Caco-2 (cell line): ENCODE measurements at regions of chr17 and their contacts with region 1.

Region 1: DNA sequence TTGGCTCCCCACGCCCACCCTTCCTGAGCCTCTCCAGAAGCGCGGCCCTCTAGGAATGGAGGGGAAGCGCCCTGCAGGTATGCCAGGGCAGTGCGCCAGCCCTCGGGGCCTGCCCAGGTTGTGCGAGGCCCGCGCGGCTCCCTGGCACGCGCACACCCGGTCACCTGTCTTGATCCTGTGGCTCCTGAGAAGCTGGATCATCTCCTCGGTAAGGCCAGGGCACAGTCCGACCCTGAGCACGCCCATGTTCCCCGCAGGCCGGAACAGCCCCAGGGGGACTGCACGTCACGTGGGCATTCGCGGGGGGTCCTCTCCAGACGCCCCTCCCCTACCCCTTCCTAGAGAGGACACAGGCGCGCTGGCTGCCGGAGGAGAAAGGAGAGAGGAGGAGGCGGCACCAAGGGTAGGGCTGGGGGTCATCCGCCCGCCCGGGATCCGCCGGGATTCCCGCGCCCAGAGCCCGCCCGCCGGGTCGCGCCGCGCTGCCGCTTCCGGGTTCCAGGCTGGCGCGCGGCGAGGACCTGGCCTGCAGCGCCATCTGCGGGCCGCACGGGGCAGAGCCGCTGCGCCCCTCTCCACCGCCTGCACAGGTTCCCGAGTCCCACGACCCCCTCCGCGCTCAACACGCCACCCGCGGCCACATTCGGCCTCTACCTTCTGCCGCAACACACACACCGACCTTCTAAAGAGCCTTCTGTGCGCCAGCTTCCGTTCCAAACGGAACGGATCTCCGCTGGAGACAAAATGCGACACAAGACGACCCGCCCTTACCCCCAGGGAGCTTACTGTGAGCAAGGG is at the start of gene RAD51D:
- DNase-seq: peak; percentile 86 to 91
- H3K4me3 ChIP-seq: peak within 1 kb of the TSS; percentile 70
- H3K4me3 Mint-ChIP-seq: peak within 1 kb of the TSS; percentile 75
- H3K27ac Mint-ChIP-seq: peak within 1 kb of the TSS; percentile 40
- H3K4me1 ChIP-seq: peaks cover 5% of the 10 kb centered on the region
- H3K4me1 Mint-ChIP-seq: no peaks in the 10 kb centered on the region
- H3K27me3 ChIP-seq: no peaks in the 10 kb centered on the region
- H3K27me3 Mint-ChIP-seq: no peaks in the 10 kb centered on the region
- CTCF ChIP-seq: peak; percentile 74 to 97
- total RNA-seq, gene RAD51D: 31.8 and 31.9 TPM in 2 replicates

Region 2: GRCh38 chr17:34542700-34543336 is 576.7 kb before region 1 on chr17:
- CTCF ChIA-PET with region 1: interaction called, 9 read pairs
- POLR2A ChIA-PET with region 1: no interaction called
- intact Hi-C with region 1: loop called (anchors 2 kb)
- DNase-seq: peak in 1 of 2 experiments; percentile 62
- H3K4me3 ChIP-seq: no peak overlapping the region
- H3K4me3 Mint-ChIP-seq: no peak overlapping the region
- H3K27ac Mint-ChIP-seq: no peak overlapping the region
- H3K4me1 ChIP-seq: no peaks in the 10 kb centered on the region
- H3K4me1 Mint-ChIP-seq: no peaks in the 10 kb centered on the region
- H3K27me3 ChIP-seq: no peaks in the 10 kb centered on the region; the same call in none of the 2 replicates
- H3K27me3 Mint-ChIP-seq: peaks cover 18% of the 10 kb centered on the region
- CTCF ChIP-seq: peak; percentile 79 to 88

Region 3: GRCh38 chr17:34980681-34981537 is 138.7 kb before region 1 on chr17:
- CTCF ChIA-PET with region 1: interaction called, 8 read pairs
- POLR2A ChIA-PET with region 1: no interaction called
- intact Hi-C with region 1: loop called (anchors 5 kb)
- DNase-seq: peak; percentile 85 to 86
- H3K4me3 ChIP-seq: peak overlapping the region; percentile 75
- H3K4me3 Mint-ChIP-seq: peak overlapping the region; percentile 85
- H3K27ac Mint-ChIP-seq: peak overlapping the region; percentile 93
- H3K4me1 ChIP-seq: 0 out of 2 replicates have a peak, but pooled peaks cover 10% of the 10 kb centered on the region
- H3K4me1 Mint-ChIP-seq: peaks cover 10% of the 10 kb centered on the region
- H3K27me3 ChIP-seq: no peaks in the 10 kb centered on the region
- H3K27me3 Mint-ChIP-seq: no peaks in the 10 kb centered on the region
- CTCF ChIP-seq: peak; percentile 46 to 71

Region 4: GRCh38 chr17:34998205-34998604 is 121.4 kb before region 1 on chr17:
- CTCF ChIA-PET with region 1: interaction called, 6 read pairs
- POLR2A ChIA-PET with region 1: interaction called, 13 read pairs
- intact Hi-C with region 1: loop called (anchors 1 kb)
- DNase-seq: peak; percentile 78 to 84
- H3K4me3 ChIP-seq: no peak overlapping the region
- H3K4me3 Mint-ChIP-seq: no peak overlapping the region
- H3K27ac Mint-ChIP-seq: no peak overlapping the region
- H3K4me1 ChIP-seq: no peaks in the 10 kb centered on the region
- H3K4me1 Mint-ChIP-seq: no peaks in the 10 kb centered on the region
- H3K27me3 ChIP-seq: no peaks in the 10 kb centered on the region
- H3K27me3 Mint-ChIP-seq: no peaks in the 10 kb centered on the region
- CTCF ChIP-seq: peak; percentile 86 to 97

Region 5: GRCh38 chr17:35254107-35254802 is 134.7 kb after region 1 on chr17:
- CTCF ChIA-PET with region 1: no interaction called
- POLR2A ChIA-PET with region 1: no interaction called
- intact Hi-C with region 1: no loop called
- DNase-seq: no peak
- H3K4me3 ChIP-seq: no peak overlapping the region
- H3K4me3 Mint-ChIP-seq: no peak overlapping the region
- H3K27ac Mint-ChIP-seq: no peak overlapping the region
- H3K4me1 ChIP-seq: no peaks in the 10 kb centered on the region
- H3K4me1 Mint-ChIP-seq: no peaks in the 10 kb centered on the region
- H3K27me3 ChIP-seq: no peaks in the 10 kb centered on the region
- H3K27me3 Mint-ChIP-seq: peaks cover 11% of the 10 kb centered on the region
- CTCF ChIP-seq: no peak